ENCODE measurements at regions of chr14 and their contacts with region 1.

Region 1: GRCh38 chr14:61860294-61860918 is 98.2 kb downstream of the SNAPC1 start:
- DNase-seq: peak; percentile 5 to 64 (median 43)
- ATAC-seq: peak; percentile 75 to 94 (median 88)
- H3K4me3 ChIP-seq: no peak overlapping the region
- H3K4me3 Mint-ChIP-seq: no peak overlapping the region
- H3K27ac ChIP-seq: no peak overlapping the region
- H3K27ac Mint-ChIP-seq: no peak overlapping the region
- H3K4me1 ChIP-seq: no peaks in the 10 kb centered on the region
- H3K4me1 Mint-ChIP-seq: peaks cover 0 to 10% (median 0%) of the 10 kb centered on the region in 3 donors
- H3K27me3 ChIP-seq: peaks cover 0 to 4% of the 10 kb centered on the region in 2 experiments
- H3K27me3 Mint-ChIP-seq: peaks cover 15 to 18% of the 10 kb centered on the region in 2 donors

Region 2: DNA sequence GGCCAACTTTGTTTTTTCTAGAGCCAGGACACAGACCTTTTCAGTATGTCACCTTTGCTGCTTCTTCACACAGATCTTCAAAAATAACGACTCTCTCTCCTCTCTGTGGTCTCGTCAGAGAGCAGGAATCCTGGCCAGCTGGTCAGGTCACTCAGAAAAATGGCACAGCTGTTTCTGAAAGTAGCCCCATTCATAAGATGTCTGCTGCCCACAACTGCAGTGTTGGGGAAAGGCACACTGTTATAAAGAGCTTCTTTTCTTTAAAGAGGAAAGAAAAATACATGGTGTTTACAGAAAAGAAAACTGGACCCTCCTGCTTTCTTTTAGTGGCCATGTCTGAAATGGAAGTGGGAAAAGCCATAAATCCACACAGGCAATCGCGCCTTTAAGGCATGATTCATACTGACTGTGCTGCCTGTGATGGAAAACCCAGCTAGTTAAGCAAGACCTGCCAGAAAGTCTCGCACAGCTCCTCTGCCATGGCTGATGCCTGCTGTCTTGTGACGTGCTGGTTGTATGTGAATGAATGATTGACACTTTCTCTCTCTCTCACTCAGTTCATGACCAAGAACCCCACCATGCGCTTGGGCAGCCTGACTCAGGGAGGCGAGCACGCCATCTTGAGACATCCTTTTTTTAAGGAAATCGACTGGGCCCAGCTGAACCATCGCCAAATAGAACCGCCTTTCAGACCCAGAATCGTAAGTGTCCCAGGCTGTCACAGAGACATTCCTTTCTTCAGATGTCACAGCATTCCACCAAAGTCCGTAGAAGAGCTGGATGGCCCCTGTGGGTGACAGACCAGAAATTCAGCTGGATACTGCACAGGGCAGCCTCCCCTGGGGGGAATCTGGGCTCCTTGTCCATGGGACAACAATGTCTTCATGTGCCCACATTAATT is 313.0 kb before region 1 on chr14:
- CTCF ChIA-PET with region 1: interaction called in 1 of 2 experiments, 11 read pairs
- POLR2A ChIA-PET with region 1: no interaction called
- DNase-seq: no peak
- ATAC-seq: no peak
- H3K4me3 ChIP-seq: no peak overlapping the region
- H3K4me3 Mint-ChIP-seq: peak overlapping the region in 1 of 3 donors; percentile 45
- H3K27ac ChIP-seq: no peak overlapping the region
- H3K27ac Mint-ChIP-seq: peak overlapping the region; percentile 62 to 69
- H3K4me1 ChIP-seq: peaks cover 0 to 4% of the 10 kb centered on the region in 2 experiments
- H3K4me1 Mint-ChIP-seq: peaks cover 42 to 51% (median 42%) of the 10 kb centered on the region in 3 donors
- H3K27me3 ChIP-seq: no peaks in the 10 kb centered on the region
- H3K27me3 Mint-ChIP-seq: no peaks in the 10 kb centered on the region

Region 3: GRCh38 chr14:62064751-62065323 is 204.4 kb after region 1 on chr14:
- CTCF ChIA-PET with region 1: no interaction called
- POLR2A ChIA-PET with region 1: no interaction called
- DNase-seq: no peak
- ATAC-seq: no peak
- H3K4me3 ChIP-seq: no peak overlapping the region
- H3K4me3 Mint-ChIP-seq: no peak overlapping the region
- H3K27ac ChIP-seq: no peak overlapping the region
- H3K27ac Mint-ChIP-seq: no peak overlapping the region
- H3K4me1 ChIP-seq: no peaks in the 10 kb centered on the region
- H3K4me1 Mint-ChIP-seq: no peaks in the 10 kb centered on the region
- H3K27me3 ChIP-seq: no peaks in the 10 kb centered on the region
- H3K27me3 Mint-ChIP-seq: peaks cover 4 to 22% of the 10 kb centered on the region in 2 donors

Measured in T-cell (primary cell).